ENCODE measurements at regions of chr15 and their contacts with region 1.

Region 1: DNA sequence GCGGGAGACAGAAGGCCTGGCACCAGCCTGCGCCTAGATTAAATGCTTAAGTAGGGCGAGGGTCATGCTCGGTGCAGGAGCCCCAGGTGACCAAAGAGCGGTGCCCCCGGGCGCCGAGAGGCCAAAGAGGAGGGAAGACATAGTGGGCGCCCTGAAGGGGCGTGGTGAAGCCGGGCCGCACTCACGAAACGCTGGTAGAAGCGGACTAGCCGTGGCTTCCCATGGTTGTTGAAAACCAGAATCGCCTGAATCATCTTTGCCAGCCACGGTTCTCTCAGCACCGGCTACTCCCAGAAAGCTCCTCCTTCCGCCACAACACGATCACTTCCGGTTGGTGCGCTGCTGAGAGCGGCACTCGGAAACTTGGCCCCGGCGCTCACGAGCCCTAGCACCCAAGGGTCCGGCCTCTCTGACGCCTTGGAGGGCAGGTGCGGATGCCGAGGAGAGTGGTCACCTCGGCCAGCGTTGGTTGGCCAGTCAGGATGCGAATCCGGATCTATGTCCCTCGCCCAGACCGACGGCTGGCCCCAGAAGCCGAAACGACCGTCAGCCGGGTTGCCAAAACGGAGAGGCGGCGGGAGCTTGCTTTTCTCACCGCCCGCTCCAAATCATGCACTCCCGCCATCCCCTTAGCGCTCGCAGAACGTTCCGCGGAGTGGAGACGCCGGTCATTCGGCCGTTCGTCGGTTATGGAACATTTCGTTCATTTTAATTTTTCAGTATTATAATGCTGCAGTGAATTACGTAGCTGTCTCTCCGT is at the start of gene AP3S2:
- DNase-seq: peak; percentile 95
- H3K4me3 Mint-ChIP-seq: peak within 1 kb of the TSS; percentile 95
- H3K27ac Mint-ChIP-seq: peak within 1 kb of the TSS; percentile 98
- H3K4me1 Mint-ChIP-seq: peaks cover 56% of the 10 kb centered on the region
- H3K27me3 Mint-ChIP-seq: no peaks in the 10 kb centered on the region
- total RNA-seq, gene AP3S2: 17.2 to 23.5 TPM

Region 2: GRCh38 chr15:89946781-89947221 is 52.9 kb after region 1 on chr15:
- CTCF ChIA-PET with region 1: no interaction called
- POLR2A ChIA-PET with region 1: no interaction called
- intact Hi-C with region 1: no loop called
- DNase-seq: no peak
- H3K4me3 Mint-ChIP-seq: no peak overlapping the region
- H3K27ac Mint-ChIP-seq: no peak overlapping the region
- H3K4me1 Mint-ChIP-seq: peaks cover 4% of the 10 kb centered on the region
- H3K27me3 Mint-ChIP-seq: no peaks in the 10 kb centered on the region

Region 3: GRCh38 chr15:89971592-89971997 is 77.7 kb after region 1 on chr15:
- CTCF ChIA-PET with region 1: interaction called, 4 read pairs
- POLR2A ChIA-PET with region 1: interaction called, 5 read pairs
- intact Hi-C with region 1: loop called (anchors 2 kb)
- DNase-seq: peak; percentile 76
- H3K4me3 Mint-ChIP-seq: no peak overlapping the region
- H3K27ac Mint-ChIP-seq: no peak overlapping the region
- H3K4me1 Mint-ChIP-seq: no peaks in the 10 kb centered on the region
- H3K27me3 Mint-ChIP-seq: no peaks in the 10 kb centered on the region

Region 4: GRCh38 chr15:90037961-90038631 is 144.2 kb after region 1 on chr15:
- CTCF ChIA-PET with region 1: no interaction called
- POLR2A ChIA-PET with region 1: no interaction called
- intact Hi-C with region 1: loop called (anchors 1 kb)
- DNase-seq: peak; percentile 82
- H3K4me3 Mint-ChIP-seq: peak overlapping the region; percentile 27
- H3K27ac Mint-ChIP-seq: peak overlapping the region; percentile 96
- H3K4me1 Mint-ChIP-seq: peaks cover 73% of the 10 kb centered on the region
- H3K27me3 Mint-ChIP-seq: no peaks in the 10 kb centered on the region

Region 5: DNA sequence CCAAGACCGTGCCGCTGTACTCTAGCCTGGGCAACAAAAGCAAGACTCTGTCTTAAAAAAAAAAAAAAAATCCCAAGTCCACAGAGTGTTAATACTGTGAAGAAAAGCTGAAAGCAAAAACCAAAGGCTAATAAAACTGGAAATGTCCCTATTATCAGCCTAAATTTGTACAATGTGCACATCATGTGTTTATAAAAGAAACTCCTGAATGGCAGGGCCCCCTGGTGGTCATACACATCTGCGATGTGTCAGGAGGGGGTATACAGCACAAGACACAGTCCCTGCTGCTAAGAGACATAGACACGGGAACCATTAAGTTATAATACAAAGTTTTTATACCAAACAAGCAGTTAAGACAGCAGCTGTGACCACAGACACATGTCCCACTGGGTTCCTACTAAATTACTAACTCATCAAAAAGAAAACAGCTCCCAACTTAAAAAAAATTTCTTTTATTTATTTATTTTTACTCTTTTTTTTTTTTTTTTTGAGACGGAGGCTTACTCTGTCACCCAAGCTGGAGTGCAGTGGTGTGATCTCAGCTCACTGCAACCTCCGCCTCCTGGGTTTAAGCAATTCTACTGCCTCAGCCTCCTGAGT is 177.4 kb after region 1 on chr15:
- CTCF ChIA-PET with region 1: interaction called, 15 read pairs
- POLR2A ChIA-PET with region 1: interaction called, 6 read pairs
- intact Hi-C with region 1: loop called (anchors 1 kb)
- DNase-seq: peak; percentile 84
- H3K4me3 Mint-ChIP-seq: no peak overlapping the region
- H3K27ac Mint-ChIP-seq: no peak overlapping the region
- H3K4me1 Mint-ChIP-seq: peaks cover 21% of the 10 kb centered on the region
- H3K27me3 Mint-ChIP-seq: no peaks in the 10 kb centered on the region

Region 6: GRCh38 chr15:90101969-90102890 is 208.4 kb after region 1 on chr15 and contains the start of gene IDH2:
- CTCF ChIA-PET with region 1: interaction called, 3 read pairs
- POLR2A ChIA-PET with region 1: interaction called, 6 read pairs
- intact Hi-C with region 1: loop called (anchors 1 kb)
- DNase-seq: peak; percentile 76
- H3K4me3 Mint-ChIP-seq: peak within 1 kb of the TSS; percentile 86
- H3K27ac Mint-ChIP-seq: peak within 1 kb of the TSS; percentile 67
- H3K4me1 Mint-ChIP-seq: peaks cover 50% of the 10 kb centered on the region
- H3K27me3 Mint-ChIP-seq: no peaks in the 10 kb centered on the region
- total RNA-seq, gene IDH2: 170 to 175 TPM